ENCODE measurements at regions of chr14 and their contacts with region 1.

Region 1: GRCh38 chr14:23631702-23632460 is 4.3 kb upstream of the DHRS2 start:
- DNase-seq: peak; percentile 63
- H3K4me3 ChIP-seq: no peak overlapping the region
- H3K27ac ChIP-seq: no peak overlapping the region
- H3K27me3 ChIP-seq: peaks cover 3% of the 10 kb centered on the region
- CTCF ChIP-seq: peak; percentile 96

Region 2: GRCh38 chr14:23555882-23556699 is 75.8 kb before region 1 on chr14 and contains the start of gene THTPA:
- CTCF ChIA-PET with region 1: no interaction called
- POLR2A ChIA-PET with region 1: no interaction called
- DNase-seq: peak; percentile 59
- H3K4me3 ChIP-seq: peak within 1 kb of the TSS; percentile 90
- H3K27ac ChIP-seq: peak within 1 kb of the TSS; percentile 73
- H3K27me3 ChIP-seq: no peaks in the 10 kb centered on the region
- CTCF ChIP-seq: no peak
- polyA plus RNA-seq, gene THTPA: 4.9 and 9.3 TPM in 2 replicates

Region 3: DNA sequence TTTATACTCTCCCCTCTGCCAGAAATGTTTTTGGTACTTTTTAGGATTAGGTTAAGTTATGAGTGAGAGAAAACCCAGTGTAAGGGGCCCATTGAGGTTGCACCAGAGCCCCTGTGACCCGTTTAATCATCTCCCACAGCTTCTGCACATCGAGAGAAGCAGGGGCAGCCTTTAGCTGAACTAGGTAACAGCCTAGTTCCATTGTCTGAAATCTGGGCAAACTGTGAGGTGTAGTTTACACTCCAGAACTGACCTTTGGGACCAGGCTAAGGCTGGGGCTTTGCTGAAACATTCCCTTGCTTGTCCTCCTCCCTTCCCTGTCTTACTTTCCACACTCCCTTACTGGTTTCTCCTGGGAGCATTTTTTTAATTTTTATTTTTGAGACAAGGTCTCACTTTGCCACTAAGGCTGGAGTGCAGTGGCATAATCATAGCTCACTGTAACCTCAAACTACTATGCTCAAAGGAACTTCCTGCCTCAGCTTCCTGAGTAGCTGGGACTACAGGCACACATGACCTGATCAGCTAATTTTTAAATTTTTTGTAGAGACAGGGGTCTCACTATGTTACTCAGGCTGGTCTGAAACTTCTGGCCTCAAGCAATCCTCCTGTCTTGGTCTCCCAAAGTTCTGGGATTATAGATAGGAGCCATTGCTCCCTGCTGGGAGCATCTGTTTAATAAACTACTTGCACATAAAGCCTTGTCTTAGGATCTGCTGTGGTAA is 21.6 kb before region 1 on chr14:
- CTCF ChIA-PET with region 1: interaction called, 27 read pairs
- POLR2A ChIA-PET with region 1: no interaction called
- DNase-seq: no peak
- H3K4me3 ChIP-seq: no peak overlapping the region
- H3K27ac ChIP-seq: no peak overlapping the region
- H3K27me3 ChIP-seq: peaks cover 4% of the 10 kb centered on the region
- CTCF ChIP-seq: no peak

Region 4: GRCh38 chr14:23621204-23621931 is 10.5 kb before region 1 on chr14:
- CTCF ChIA-PET with region 1: interaction called, 23 read pairs
- POLR2A ChIA-PET with region 1: no interaction called
- DNase-seq: no peak
- H3K4me3 ChIP-seq: no peak overlapping the region
- H3K27ac ChIP-seq: no peak overlapping the region
- H3K27me3 ChIP-seq: no peaks in the 10 kb centered on the region
- CTCF ChIP-seq: no peak

Region 5: GRCh38 chr14:23665375-23666192 is 33.7 kb after region 1 on chr14:
- CTCF ChIA-PET with region 1: interaction called, 11 read pairs
- POLR2A ChIA-PET with region 1: no interaction called
- DNase-seq: peak; percentile 2
- H3K4me3 ChIP-seq: no peak overlapping the region
- H3K27ac ChIP-seq: no peak overlapping the region
- H3K27me3 ChIP-seq: peaks cover 10% of the 10 kb centered on the region
- CTCF ChIP-seq: peak; percentile 65

Region 6: DNA sequence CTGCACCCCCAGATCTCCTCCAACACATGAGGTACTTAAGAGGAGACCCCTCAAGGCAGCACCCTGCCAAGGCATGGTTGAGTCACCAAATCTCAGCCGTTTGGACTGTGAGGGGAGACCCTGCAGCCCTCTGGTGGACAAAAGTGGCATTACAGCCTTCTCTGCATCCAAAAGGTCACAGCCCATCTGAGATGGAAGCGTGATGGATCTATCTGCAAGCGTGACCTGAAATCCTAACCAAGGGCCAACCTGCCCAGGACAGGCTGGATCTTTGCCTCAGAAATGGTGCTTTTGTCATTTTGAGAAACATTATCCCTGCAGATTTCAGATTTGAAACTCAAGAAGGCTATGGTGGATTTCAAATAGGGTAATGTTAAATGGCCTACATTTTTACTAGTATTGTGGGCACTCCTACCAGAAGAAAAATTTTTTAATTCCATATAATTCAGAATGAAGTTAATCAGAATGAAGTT is 298.0 kb after region 1 on chr14:
- CTCF ChIA-PET with region 1: interaction called, 74 read pairs
- POLR2A ChIA-PET with region 1: no interaction called
- DNase-seq: peak; percentile 53
- H3K4me3 ChIP-seq: no peak overlapping the region
- H3K27ac ChIP-seq: no peak overlapping the region
- H3K27me3 ChIP-seq: peaks cover 4% of the 10 kb centered on the region
- CTCF ChIP-seq: peak; percentile 96

Measured in AG04450 (cell line).